Mammary epithelial cell (primary cell): ENCODE measurements at regions of chr1 and their contacts with region 1.

Region 1: DNA sequence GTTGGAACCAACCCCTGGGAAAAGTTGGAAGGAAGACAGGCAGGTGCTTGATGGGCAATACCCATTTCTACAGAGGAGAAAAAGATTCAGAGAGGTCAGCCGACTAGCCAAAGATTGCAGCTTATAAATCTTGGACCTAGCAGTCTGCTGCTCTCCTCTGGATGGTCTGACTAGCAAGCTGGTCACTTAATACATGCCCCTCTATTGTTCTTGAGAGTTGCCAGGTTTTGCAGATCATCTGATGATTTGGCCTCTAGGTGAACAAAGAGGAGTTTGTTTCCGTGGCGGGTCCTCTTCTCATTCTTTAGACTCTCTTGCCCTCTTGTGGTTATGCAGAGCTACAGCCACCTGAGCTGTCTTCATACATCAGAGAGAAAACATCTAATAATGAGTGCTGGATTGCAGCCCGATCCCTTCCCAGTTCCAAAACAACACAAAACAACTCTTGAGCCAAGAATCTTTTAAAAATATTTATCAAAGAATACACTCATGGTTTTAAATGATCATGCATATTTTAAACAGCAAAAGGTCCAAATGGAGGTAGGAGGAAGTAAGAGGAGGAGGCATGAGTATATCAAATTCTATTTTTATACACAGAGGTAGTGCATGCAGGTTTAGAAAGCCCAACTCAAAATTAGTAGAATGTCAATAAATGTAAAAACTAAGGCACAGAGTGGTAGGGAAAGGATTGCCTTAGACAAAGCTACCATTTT is 115.7 kb downstream of the SLC30A10 start:
- DNase-seq: peak; percentile 63
- H3K4me3 ChIP-seq: no peak overlapping the region
- H3K27ac ChIP-seq: no peak overlapping the region
- H3K4me1 ChIP-seq: no peaks in the 10 kb centered on the region
- H3K27me3 ChIP-seq: peaks cover 21% of the 10 kb centered on the region
- CTCF ChIP-seq: peak; percentile 87 to 94

Region 2: DNA sequence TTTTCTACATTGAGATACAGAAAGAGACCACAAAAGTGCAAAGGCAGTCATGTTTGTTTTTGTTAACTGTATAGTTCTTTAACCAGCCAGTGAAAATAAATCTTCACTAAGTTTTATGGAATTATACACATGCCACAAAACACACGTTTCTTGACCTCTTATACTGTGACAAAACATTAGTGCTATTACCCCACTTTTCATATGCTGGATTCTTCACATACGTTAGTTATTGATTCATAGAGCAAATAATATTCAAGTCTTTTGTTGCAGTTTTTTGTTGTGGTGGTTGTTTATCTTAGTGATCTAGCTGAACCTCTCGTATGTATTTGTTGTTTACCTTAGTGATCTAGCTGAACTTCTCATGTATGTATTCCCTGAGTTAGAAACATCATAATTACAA is 611.0 kb before region 1 on chr1:
- CTCF ChIA-PET with region 1: no interaction called
- dilution Hi-C with region 1: no loop called
- in situ Hi-C with region 1: no loop called
- intact Hi-C with region 1: loop called (anchors 5 kb)
- DNase-seq: no peak
- H3K4me3 ChIP-seq: no peak overlapping the region
- H3K27ac ChIP-seq: no peak overlapping the region
- H3K4me1 ChIP-seq: no peaks in the 10 kb centered on the region
- H3K27me3 ChIP-seq: no peaks in the 10 kb centered on the region
- CTCF ChIP-seq: no peak

Region 3: DNA sequence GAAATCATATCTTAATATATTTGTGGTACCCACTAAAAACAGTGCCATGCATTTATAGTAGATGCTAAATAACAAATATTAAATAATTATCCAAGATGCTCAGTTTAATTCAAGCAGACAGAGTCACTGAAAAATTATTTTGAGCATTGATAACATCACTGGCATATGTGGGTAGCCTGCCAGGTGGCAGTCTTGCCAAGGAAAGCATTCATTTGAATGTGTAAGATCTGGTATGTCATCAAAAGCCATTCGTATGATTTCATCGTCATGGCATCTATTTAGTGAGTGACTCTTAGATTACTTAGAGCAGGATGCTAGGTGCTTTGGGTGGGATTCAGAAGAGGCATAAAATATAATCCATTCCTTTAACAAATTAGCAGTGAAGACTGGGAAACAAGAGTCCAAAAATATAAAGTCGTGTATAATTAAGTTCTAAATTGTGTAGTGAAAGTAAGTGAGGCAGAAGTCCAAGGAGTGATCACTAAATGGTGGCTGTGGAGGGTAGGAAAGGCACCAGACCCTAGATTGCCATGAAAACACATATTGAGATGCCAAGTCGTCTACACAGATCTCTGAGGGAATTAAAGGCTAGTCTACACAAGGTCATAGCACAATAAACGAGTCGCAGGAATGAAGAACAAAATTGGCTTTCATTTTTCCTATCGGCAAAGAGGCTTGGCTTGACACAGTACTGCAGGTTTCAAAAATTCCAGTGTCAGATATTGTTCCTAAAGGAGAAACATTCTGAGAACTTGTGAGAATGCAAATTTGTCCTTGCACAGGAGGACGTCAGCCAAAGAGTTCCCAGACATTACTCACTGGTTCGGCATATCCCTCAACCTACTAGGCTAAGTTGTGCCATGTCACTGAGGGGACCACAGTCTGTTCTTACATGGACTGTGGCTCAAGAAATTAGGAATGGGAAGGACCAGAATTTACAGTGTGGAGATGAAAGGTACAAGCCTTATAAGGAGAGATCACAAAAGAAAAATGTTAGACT is 508.1 kb before region 1 on chr1:
- CTCF ChIA-PET with region 1: no interaction called
- dilution Hi-C with region 1: no loop called
- in situ Hi-C with region 1: no loop called
- intact Hi-C with region 1: loop called (anchors 2 kb)
- DNase-seq: peak; percentile 43
- H3K4me3 ChIP-seq: no peak overlapping the region
- H3K27ac ChIP-seq: no peak overlapping the region
- H3K4me1 ChIP-seq: peaks cover 7% of the 10 kb centered on the region
- H3K27me3 ChIP-seq: peaks cover 32% of the 10 kb centered on the region
- CTCF ChIP-seq: peak; percentile 23 to 49

Region 4: DNA sequence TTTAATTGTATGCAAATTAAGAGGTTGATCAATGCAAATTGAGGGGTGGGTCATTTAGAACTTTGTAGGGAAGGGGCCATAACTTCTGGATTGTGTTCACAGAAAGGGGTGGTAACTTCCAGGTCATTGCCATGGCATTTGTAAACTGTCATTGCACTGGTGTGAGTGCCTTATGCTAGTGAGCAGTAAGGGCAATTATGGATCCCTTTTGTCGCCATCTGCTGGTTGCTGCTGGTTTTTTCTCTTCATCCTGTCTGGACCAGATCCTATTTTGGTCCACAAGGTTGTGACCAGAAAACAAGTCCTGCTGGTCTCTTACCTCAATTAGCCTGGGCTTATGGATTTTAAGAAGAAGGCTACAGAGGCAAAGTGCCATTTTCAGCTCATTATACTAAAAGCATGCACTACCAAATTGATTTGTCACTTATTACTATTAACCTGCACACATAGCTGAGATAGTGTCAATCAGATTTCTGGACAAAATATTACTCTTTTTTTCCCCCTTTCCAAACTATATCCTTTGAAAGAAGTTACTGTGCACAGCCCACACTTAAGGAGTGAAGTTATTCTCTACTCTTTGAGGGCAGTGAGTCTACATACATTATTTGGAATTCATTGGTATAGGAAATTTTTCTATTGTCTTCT is 395.9 kb before region 1 on chr1:
- CTCF ChIA-PET with region 1: no interaction called
- dilution Hi-C with region 1: no loop called
- in situ Hi-C with region 1: no loop called
- intact Hi-C with region 1: loop called (anchors 1 kb)
- DNase-seq: peak; percentile 40
- H3K4me3 ChIP-seq: no peak overlapping the region
- H3K27ac ChIP-seq: no peak overlapping the region
- H3K4me1 ChIP-seq: no peaks in the 10 kb centered on the region
- H3K27me3 ChIP-seq: peaks cover 3% of the 10 kb centered on the region
- CTCF ChIP-seq: peak; percentile 70 to 78

Region 5: GRCh38 chr1:219587805-219588561 is 224.7 kb before region 1 on chr1:
- CTCF ChIA-PET with region 1: no interaction called
- dilution Hi-C with region 1: no loop called
- in situ Hi-C with region 1: no loop called
- intact Hi-C with region 1: loop called (anchors 5 kb)
- DNase-seq: no peak
- H3K4me3 ChIP-seq: no peak overlapping the region
- H3K27ac ChIP-seq: no peak overlapping the region
- H3K4me1 ChIP-seq: peaks cover 9% of the 10 kb centered on the region
- H3K27me3 ChIP-seq: no peaks in the 10 kb centered on the region
- CTCF ChIP-seq: no peak

Region 6: DNA sequence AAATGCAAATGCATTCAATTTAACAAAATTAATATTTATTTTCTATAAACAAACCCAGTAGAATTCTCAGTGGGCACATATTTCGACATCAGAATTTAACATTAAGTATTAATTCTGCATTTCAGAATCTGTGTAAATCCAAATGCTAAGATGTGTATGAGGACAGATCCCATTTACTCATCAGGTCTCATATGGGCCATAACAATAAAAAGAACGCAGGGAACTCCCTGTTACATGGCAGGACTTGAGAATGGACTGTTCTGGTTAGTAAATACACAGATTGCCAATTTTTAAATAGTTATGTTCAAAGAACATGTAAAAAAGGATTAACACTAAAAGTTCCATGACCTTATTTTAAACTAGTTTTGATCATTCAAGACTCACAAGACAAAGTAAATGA is 11.7 kb after region 1 on chr1:
- CTCF ChIA-PET with region 1: no interaction called
- dilution Hi-C with region 1: no loop called
- in situ Hi-C with region 1: no loop called
- intact Hi-C with region 1: no loop called
- DNase-seq: no peak
- H3K4me3 ChIP-seq: no peak overlapping the region
- H3K27ac ChIP-seq: no peak overlapping the region
- H3K4me1 ChIP-seq: no peaks in the 10 kb centered on the region
- H3K27me3 ChIP-seq: no peaks in the 10 kb centered on the region
- CTCF ChIP-seq: no peak

Region 7: GRCh38 chr1:219993554-219994433 is 181.1 kb after region 1 on chr1:
- CTCF ChIA-PET with region 1: no interaction called
- dilution Hi-C with region 1: no loop called
- in situ Hi-C with region 1: no loop called
- intact Hi-C with region 1: no loop called
- DNase-seq: no peak
- H3K4me3 ChIP-seq: no peak overlapping the region
- H3K27ac ChIP-seq: no peak overlapping the region
- H3K4me1 ChIP-seq: no peaks in the 10 kb centered on the region
- H3K27me3 ChIP-seq: no peaks in the 10 kb centered on the region
- CTCF ChIP-seq: no peak